K562 (cell line): ENCODE measurements at regions of chr14 and their contacts with region 1.

Region 1: GRCh38 chr14:104708606-104709268 is 15.3 kb upstream of the ADSS1 start:
- DNase-seq: peak; percentile 75 to 85 (median 77)
- ATAC-seq: peak; percentile 96
- H3K4me3 ChIP-seq: no peak overlapping the region
- H3K27ac ChIP-seq: no peak overlapping the region
- H3K4me1 ChIP-seq: peaks cover 0 to 34% of the 10 kb centered on the region in 2 experiments; a peak in 2 of 5 replicates
- H3K27me3 ChIP-seq: no peaks in the 10 kb centered on the region
- CTCF ChIP-seq: peak; percentile 87 to 88 (median 88)
- EP300 ChIP-seq: no peak
- POLR2A ChIP-seq: no peak
- RAD21 ChIP-seq: peak; percentile 61 to 86

Region 2: DNA sequence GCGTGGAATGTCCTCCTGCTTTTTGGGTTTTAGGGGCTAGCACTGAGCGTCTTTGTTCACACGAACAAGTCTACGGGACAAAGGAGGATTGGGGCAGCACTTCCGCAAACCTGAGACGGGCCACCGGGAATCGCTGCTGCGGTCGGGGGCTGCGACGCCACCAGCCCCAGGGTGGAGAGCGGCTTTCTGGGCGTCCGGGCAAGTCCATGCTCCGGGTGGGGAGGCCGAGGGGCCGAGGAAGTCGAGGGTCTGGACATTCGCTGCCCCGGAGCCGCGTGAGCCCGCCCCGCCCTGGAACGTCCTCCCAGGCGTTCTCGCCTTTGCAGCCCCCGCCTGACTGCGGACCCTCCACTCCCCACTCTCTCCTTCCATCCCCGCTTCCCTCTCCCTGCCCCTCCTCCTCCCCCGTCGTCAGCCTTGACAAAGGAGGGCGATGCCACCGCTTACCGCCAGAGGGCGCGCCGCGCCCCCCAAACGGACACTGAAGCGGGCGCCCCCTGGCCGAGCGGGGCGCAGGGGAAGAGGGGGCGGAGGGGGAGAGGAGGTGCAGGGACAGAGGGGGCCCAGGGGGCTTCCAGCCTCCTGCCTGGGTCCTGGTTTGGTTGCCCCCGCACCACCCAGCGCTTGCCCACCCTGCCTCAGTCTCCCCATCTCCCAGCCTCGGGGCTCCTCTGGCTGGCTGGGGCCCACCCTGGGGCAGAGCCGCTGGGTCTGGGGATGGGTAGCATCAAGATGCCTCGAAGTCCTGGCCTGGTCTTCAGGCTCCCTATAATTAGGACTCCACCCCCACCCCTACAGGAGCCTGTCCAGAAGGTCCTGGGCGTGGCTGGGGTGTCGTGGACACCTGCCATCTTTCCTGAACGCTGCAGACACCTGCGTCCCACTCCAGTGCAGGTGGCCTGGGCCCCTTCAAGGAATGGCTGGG is 58.4 kb before region 1 on chr14:
- CTCF ChIA-PET with region 1: interaction called, 21 read pairs
- POLR2A ChIA-PET with region 1: no interaction called
- in situ Hi-C with region 1: loop called (anchors 5 kb)
- intact Hi-C with region 1: loop called (anchors 1 kb)
- DNase-seq: peak; percentile 71 to 85 (median 82)
- ATAC-seq: peak; percentile 97
- H3K4me3 ChIP-seq: no peak overlapping the region
- H3K27ac ChIP-seq: no peak overlapping the region
- H3K4me1 ChIP-seq: peaks cover 0 to 22% of the 10 kb centered on the region in 2 experiments; a peak in 3 of 5 replicates
- H3K27me3 ChIP-seq: peaks cover 3 to 9% of the 10 kb centered on the region in 2 experiments; a peak in 2 of 5 replicates
- CTCF ChIP-seq: peak; percentile 77 to 99 (median 90)
- EP300 ChIP-seq: no peak
- POLR2A ChIP-seq: no peak
- RAD21 ChIP-seq: peak; percentile 72 to 82

Region 3: DNA sequence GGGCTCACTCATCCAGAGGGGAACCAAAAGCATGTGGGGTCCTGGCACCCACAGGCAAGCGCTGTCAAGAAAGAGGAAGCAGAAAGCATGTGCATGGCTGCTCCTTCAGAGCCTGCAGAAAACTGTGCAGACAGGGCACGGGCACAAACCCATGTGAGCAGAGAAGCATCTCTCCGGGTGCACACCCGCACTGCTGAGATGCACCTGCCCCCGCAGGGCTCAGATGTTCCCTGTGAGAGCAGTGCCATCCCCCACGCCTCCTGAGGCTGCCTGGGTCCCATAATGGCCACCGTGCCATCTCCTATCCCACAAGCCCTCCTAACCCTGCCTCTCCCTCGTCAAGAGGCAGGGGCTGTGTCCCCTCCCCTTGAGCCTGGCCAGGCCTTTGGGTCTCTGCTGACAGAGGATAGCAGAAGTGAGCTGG is 51.6 kb before region 1 on chr14:
- CTCF ChIA-PET with region 1: no interaction called
- POLR2A ChIA-PET with region 1: no interaction called
- in situ Hi-C with region 1: loop called (anchors 5 kb)
- intact Hi-C with region 1: no loop called
- DNase-seq: no peak
- ATAC-seq: no peak
- H3K4me3 ChIP-seq: no peak overlapping the region
- H3K27ac ChIP-seq: no peak overlapping the region
- H3K4me1 ChIP-seq: peaks cover 0 to 13% of the 10 kb centered on the region in 2 experiments; a peak in 2 of 5 replicates
- H3K27me3 ChIP-seq: peaks cover 3 to 45% of the 10 kb centered on the region in 2 experiments; a peak in 4 of 5 replicates
- CTCF ChIP-seq: no peak
- EP300 ChIP-seq: no peak
- POLR2A ChIP-seq: no peak
- RAD21 ChIP-seq: no peak